ENCODE measurements at regions of chr12 and their contacts with region 1.

Region 1: GRCh38 chr12:42308390-42308789 is 17.5 kb downstream of the ZCRB1 start:
- DNase-seq: no peak
- H3K4me3 ChIP-seq: no peak overlapping the region
- H3K27ac ChIP-seq: no peak overlapping the region
- H3K4me1 ChIP-seq: no peaks in the 10 kb centered on the region
- H3K27me3 ChIP-seq: no peaks in the 10 kb centered on the region
- CTCF ChIP-seq: no peak
- POLR2A ChIP-seq: no peak

Region 2: DNA sequence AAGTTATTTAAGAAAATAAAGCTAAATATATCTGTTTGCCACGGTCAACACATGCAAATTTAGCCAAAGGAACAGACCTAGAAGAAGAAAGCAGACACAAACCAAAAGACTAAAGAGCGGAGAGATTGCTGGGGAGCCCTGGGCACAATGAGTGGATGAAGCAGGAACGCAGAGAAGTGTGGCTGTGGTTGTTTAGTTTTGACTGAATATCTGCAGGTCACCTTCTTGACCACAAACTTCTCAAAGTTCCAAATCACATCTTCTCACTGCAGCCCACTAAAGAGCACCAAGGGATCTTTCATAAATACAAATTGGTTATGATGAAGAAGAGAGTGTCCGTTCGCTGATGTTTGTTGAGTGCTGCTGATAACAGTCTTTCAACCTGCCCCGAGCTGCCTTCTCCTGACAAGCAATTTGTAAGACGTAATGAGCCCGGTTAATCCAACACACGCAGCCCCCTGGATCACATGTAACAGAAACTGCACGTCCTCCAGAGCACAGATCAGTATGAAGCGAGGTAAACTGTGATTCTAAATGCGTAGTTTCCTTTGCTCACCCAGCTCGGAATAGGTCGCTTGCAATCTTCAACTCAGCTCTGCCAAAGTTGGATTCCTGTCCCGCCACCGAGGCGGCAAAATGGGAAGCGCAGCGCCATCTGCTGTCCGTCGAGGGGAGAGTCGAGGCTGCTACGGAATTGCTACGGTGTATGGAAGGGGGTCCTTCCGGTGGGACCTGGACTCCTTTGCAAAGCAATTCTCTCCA is 284.5 kb before region 1 on chr12:
- CTCF ChIA-PET with region 1: no interaction called
- POLR2A ChIA-PET with region 1: no interaction called
- dilution Hi-C with region 1: no loop called
- intact Hi-C with region 1: no loop called
- DNase-seq: peak; percentile 81
- H3K4me3 ChIP-seq: peak overlapping the region in 2 of 3 experiments; percentile 31 to 58
- H3K27ac ChIP-seq: peak overlapping the region; percentile 30
- H3K4me1 ChIP-seq: peaks cover 23% of the 10 kb centered on the region
- H3K27me3 ChIP-seq: no peaks in the 10 kb centered on the region
- CTCF ChIP-seq: peak; percentile 93 to 96
- POLR2A ChIP-seq: no peak

Region 3: GRCh38 chr12:42208574-42208973 is 99.8 kb before region 1 on chr12:
- CTCF ChIA-PET with region 1: no interaction called
- POLR2A ChIA-PET with region 1: no interaction called
- dilution Hi-C with region 1: no loop called
- intact Hi-C with region 1: no loop called
- DNase-seq: no peak
- H3K4me3 ChIP-seq: no peak overlapping the region
- H3K27ac ChIP-seq: no peak overlapping the region
- H3K4me1 ChIP-seq: no peaks in the 10 kb centered on the region
- H3K27me3 ChIP-seq: no peaks in the 10 kb centered on the region
- CTCF ChIP-seq: no peak
- POLR2A ChIP-seq: no peak

Region 4: DNA sequence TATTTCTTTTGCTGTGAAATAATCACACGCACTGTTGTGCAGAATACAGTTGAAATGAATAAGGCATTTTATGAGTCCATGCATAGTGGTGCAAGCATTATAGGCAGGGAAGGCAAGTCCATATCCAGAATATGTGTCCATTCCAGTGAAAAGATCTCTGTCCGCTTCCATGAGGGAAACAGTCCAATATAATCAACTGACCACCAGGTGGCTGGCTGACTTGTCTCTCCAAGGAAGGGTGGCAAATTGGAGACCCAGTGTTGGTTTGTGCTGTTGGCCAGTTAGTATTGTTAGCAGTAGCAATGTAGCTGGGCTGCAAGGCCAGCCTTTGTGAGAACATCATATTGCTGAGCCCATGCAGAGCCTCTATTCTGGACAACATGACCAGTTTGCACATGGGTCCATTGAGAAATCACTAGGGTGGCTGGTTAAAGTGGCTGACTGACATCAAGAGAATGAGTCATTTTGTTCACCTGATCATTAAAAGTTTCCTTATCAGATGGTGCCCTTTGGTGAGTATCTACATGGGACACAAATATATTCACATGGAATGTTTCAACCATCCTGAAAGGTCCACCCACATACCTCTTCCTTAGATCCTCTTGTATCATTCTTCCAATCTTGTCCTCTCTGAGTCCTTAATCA is 53.0 kb before region 1 on chr12:
- CTCF ChIA-PET with region 1: no interaction called
- POLR2A ChIA-PET with region 1: no interaction called
- dilution Hi-C with region 1: no loop called
- intact Hi-C with region 1: loop called (anchors 5 kb)
- DNase-seq: no peak
- H3K4me3 ChIP-seq: no peak overlapping the region
- H3K27ac ChIP-seq: no peak overlapping the region
- H3K4me1 ChIP-seq: no peaks in the 10 kb centered on the region
- H3K27me3 ChIP-seq: no peaks in the 10 kb centered on the region
- CTCF ChIP-seq: no peak
- POLR2A ChIP-seq: no peak

Measured in endothelial cell of umbilical vein (primary cell).